ENCODE measurements at regions of chr10 and their contacts with region 1.

Region 1: GRCh38 chr10:79487296-79488194 is 24.8 kb upstream of the EIF5AL1 start:
- DNase-seq: peak; percentile 68
- H3K4me3 Mint-ChIP-seq: no peak overlapping the region
- H3K27ac Mint-ChIP-seq: peak overlapping the region; percentile 80
- H3K4me1 Mint-ChIP-seq: peaks cover 15% of the 10 kb centered on the region
- H3K27me3 Mint-ChIP-seq: no peaks in the 10 kb centered on the region
- CTCF ChIP-seq: peak; percentile 26

Region 2: GRCh38 chr10:79454259-79454658 is 33.3 kb before region 1 on chr10:
- CTCF ChIA-PET with region 1: no interaction called
- POLR2A ChIA-PET with region 1: interaction called, 6 read pairs
- intact Hi-C with region 1: loop called (anchors 5 kb)
- DNase-seq: peak; percentile 96
- H3K4me3 Mint-ChIP-seq: no peak overlapping the region
- H3K27ac Mint-ChIP-seq: no peak overlapping the region
- H3K4me1 Mint-ChIP-seq: peaks cover 11% of the 10 kb centered on the region
- H3K27me3 Mint-ChIP-seq: no peaks in the 10 kb centered on the region
- CTCF ChIP-seq: no peak

Measured in MCF 10A (cell line).